Upper lobe of right lung (tissue), 1 donor: ENCODE measurements at regions of chr19 and their contacts with region 1.

Region 1: GRCh38 chr19:42184401-42184861 is 33.0 kb downstream of the DEDD2 start:
- DNase-seq: peak; percentile 80
- ATAC-seq: peak; percentile 90
- H3K4me3 ChIP-seq: no peak overlapping the region
- H3K27ac ChIP-seq: no peak overlapping the region
- H3K4me1 ChIP-seq: no peaks in the 10 kb centered on the region
- H3K27me3 ChIP-seq: peaks cover 24% of the 10 kb centered on the region
- CTCF ChIP-seq: peak; percentile 93

Region 2: DNA sequence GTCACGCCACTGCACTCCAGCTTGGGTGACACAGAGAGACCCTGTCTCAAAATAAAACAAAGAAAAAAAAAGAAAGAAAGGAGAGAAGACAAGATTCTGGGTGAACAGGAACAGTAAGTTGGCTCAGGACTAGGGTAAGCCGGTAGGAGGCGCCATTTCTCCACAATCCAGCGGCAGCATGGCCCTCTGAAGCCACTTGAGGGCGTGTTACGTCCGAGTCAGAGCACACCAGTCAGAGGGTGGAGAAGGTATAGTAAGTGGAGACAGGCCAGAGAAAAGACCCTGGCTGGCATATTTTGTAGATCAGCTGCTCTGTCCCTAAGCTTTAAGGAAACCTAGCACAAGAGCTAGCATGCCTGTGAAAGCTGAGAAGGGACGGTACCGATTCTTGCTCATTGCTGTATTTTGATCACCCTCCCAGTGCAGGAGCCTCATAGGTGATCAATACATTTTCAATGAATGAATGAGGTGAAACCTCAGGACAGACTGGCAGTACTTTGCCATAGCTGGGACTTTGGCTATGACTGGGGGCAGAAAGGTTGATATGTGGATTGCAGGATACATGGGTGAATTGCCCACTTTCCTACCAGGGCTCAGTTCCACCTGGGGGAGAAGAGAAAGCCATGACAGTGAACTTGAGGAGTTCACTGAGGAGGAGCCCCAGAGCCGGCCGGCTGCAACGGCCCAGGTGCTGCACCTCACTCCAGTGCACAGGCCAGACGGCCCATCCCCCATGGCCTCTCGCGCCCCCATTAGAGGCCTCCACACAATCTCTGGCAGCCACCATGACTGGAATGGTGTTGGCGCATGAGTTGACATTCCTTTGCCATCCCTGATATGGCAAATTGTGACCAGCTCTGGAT is 75.7 kb before region 1 on chr19:
- intact Hi-C with region 1: no loop called
- DNase-seq: peak; percentile 84
- ATAC-seq: peak; percentile 97
- H3K4me3 ChIP-seq: no peak overlapping the region
- H3K27ac ChIP-seq: no peak overlapping the region
- H3K4me1 ChIP-seq: no peaks in the 10 kb centered on the region
- H3K27me3 ChIP-seq: no peaks in the 10 kb centered on the region
- CTCF ChIP-seq: peak; percentile 90

Region 3: DNA sequence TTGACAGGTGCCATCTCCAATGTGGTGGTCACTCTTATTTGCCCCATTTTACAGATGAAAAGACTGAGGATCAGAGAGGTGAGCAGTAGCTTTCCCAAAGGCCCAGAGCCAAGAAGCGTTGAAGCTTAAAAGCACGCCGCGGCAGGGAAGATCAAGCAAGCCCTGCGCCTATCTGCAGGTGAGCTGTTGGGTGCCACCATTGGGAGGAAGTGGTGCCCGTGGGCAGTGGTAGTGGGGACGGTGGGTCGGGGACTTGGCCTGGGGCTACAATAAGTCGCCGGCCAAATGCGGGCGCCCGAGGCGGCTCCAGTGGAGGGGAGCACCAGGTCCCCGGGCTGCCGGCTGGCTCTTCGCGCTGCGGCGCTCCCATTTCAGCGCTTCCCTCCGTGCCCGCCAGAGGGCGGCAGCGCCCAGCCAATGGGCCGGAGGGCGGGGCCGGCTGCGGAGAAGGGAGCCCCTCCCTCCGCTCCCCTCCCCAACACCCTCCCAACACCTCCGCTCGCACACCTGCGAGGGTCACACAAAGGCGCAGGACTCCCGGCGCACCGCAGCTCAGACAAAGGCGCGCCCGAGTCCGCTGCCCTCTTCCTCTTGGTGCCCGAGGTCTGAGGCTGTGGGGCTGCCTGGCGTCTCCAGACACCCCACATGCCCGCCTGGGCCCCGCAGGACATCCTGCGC is 51.4 kb before region 1 on chr19:
- intact Hi-C with region 1: loop called (anchors 10 kb)
- DNase-seq: peak; percentile 84
- ATAC-seq: peak; percentile 91
- H3K4me3 ChIP-seq: peak overlapping the region; percentile 34
- H3K27ac ChIP-seq: no peak overlapping the region
- H3K4me1 ChIP-seq: peaks cover 9% of the 10 kb centered on the region
- H3K27me3 ChIP-seq: peaks cover 19% of the 10 kb centered on the region
- CTCF ChIP-seq: peak; percentile 98